HEK293 (cell line): ENCODE measurements at regions of chr1 and their contacts with region 1.

Region 1: GRCh38 chr1:155050560-155051341 is at the start of gene ADAM15:
- H3K4me3 ChIP-seq: peak within 1 kb of the TSS; percentile 66
- H3K27ac ChIP-seq: peak within 1 kb of the TSS; percentile 78; the same call in 1 of the 2 replicates
- H3K4me1 ChIP-seq: peaks cover 9% of the 10 kb centered on the region
- CTCF ChIP-seq: peak; percentile 99

Region 2: GRCh38 chr1:154955718-154956543 is 94.8 kb before region 1 on chr1 and contains the start of gene PBXIP1:
- CTCF ChIA-PET with region 1: interaction called, 10 read pairs
- POLR2A ChIA-PET with region 1: interaction called, 4 read pairs
- H3K4me3 ChIP-seq: peak within 1 kb of the TSS; percentile 59
- H3K27ac ChIP-seq: no peak within 1 kb of the TSS
- H3K4me1 ChIP-seq: peaks cover 5% of the 10 kb centered on the region; the same call in 1 of the 2 replicates
- CTCF ChIP-seq: peak; percentile 20; the same call in 1 of the 2 replicates

Region 3: GRCh38 chr1:155038602-155039307 is 12.0 kb before region 1 on chr1:
- CTCF ChIA-PET with region 1: interaction called, 31 read pairs
- POLR2A ChIA-PET with region 1: interaction called, 5 read pairs
- H3K4me3 ChIP-seq: no peak overlapping the region
- H3K27ac ChIP-seq: no peak overlapping the region
- H3K4me1 ChIP-seq: no peaks in the 10 kb centered on the region
- CTCF ChIP-seq: no peak

Region 4: DNA sequence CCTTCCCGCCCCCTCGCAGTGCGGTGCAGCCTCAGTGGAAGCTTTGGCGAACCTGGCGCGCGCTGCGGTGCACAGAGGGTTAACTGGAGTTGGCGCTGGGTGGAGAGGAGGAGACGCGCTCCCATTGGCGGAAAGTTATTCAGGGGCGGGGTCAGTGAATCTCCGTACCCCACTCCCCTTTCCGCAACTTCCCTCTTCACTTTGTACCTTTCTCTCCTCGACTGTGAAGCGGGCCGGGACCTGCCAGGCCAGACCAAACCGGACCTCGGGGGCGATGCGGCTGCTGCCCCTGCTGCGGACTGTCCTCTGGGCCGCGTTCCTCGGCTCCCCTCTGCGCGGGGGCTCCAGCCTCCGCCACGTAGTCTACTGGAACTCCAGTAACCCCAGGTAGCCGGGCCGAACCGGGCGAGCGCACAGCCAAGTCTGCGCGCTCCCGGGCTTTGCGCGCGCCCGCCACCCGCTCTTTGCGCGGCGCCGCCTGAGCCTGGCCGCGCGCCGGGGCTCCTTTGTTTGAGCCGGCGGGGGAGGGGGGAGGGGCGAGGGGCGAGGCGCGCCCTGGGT is 12.9 kb after region 1 on chr1 and contains the start of gene EFNA4:
- CTCF ChIA-PET with region 1: interaction called, 94 read pairs
- POLR2A ChIA-PET with region 1: interaction called, 7 read pairs
- H3K4me3 ChIP-seq: peak within 1 kb of the TSS; percentile 88
- H3K27ac ChIP-seq: peak within 1 kb of the TSS; percentile 64; the same call in 1 of the 2 replicates
- H3K4me1 ChIP-seq: no peaks in the 10 kb centered on the region; the same call in none of the 2 replicates
- CTCF ChIP-seq: no peak